B cell (primary cell): ENCODE measurements at regions of chr6 and their contacts with region 1.

Region 1: GRCh38 chr6:111997078-111997852 is 56.6 kb upstream of the CCN6 start:
- DNase-seq: peak; percentile 79
- ATAC-seq: peak; percentile 93
- H3K4me3 ChIP-seq: no peak overlapping the region
- H3K4me3 Mint-ChIP-seq: peak overlapping the region; percentile 30
- H3K27ac ChIP-seq: no peak overlapping the region
- H3K27ac Mint-ChIP-seq: no peak overlapping the region
- H3K4me1 ChIP-seq: peaks cover 4 to 6% of the 10 kb centered on the region in 2 donors
- H3K4me1 Mint-ChIP-seq: peaks cover 9% of the 10 kb centered on the region
- H3K27me3 ChIP-seq: peaks cover 0 to 11% (median 3%) of the 10 kb centered on the region in 4 experiments
- H3K27me3 Mint-ChIP-seq: peaks cover 21% of the 10 kb centered on the region
- CTCF ChIP-seq: peak; percentile 94

Region 2: DNA sequence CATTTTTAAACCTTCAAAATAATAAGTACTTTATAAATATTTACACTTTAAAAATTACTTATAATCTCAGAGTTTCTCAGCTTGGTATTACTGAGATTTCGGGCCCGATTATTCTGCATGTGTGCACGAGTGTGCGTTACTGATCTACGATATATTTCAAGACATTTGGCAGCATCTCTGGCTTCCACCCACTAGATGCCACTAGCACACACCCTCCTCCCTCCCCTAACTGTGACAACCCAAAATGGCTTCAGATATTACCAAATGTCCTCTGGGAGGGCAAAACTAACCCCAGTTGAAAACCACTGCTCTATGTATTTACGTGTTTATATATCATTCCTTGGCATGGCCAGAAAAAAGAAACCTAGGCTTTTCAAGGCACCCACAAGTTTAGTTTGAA is 219.9 kb before region 1 on chr6:
- CTCF ChIA-PET with region 1: no interaction called
- POLR2A ChIA-PET with region 1: no interaction called
- intact Hi-C with region 1: loop called (anchors 1 kb)
- DNase-seq: no peak
- ATAC-seq: peak; percentile 65
- H3K4me3 ChIP-seq: no peak overlapping the region
- H3K4me3 Mint-ChIP-seq: peak overlapping the region; percentile 8
- H3K27ac ChIP-seq: no peak overlapping the region
- H3K27ac Mint-ChIP-seq: no peak overlapping the region
- H3K4me1 ChIP-seq: no peaks in the 10 kb centered on the region
- H3K4me1 Mint-ChIP-seq: peaks cover 19% of the 10 kb centered on the region
- H3K27me3 ChIP-seq: no peaks in the 10 kb centered on the region
- H3K27me3 Mint-ChIP-seq: no peaks in the 10 kb centered on the region
- CTCF ChIP-seq: no peak

Region 3: DNA sequence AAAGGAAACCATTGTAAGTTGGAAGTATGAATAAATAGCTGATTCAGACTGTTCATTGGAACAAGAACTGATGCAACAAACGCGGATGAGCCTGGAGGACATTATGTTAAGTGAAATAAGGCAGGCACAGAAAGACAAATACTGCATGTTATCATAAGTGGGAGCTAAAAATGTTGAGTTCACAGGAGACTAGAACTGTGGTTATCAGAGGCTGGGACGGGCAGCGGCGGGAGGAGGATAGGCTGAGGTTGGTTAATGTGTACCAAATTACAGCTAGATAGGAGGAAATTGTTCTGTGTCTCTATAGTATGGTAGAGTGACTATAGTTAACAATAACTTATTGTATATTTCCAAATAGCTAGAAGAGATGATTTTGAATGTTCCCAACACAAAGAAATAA is 130.9 kb after region 1 on chr6:
- CTCF ChIA-PET with region 1: no interaction called
- POLR2A ChIA-PET with region 1: no interaction called
- intact Hi-C with region 1: no loop called
- DNase-seq: no peak
- ATAC-seq: no peak
- H3K4me3 ChIP-seq: no peak overlapping the region
- H3K4me3 Mint-ChIP-seq: no peak overlapping the region
- H3K27ac ChIP-seq: no peak overlapping the region
- H3K27ac Mint-ChIP-seq: no peak overlapping the region
- H3K4me1 ChIP-seq: no peaks in the 10 kb centered on the region
- H3K4me1 Mint-ChIP-seq: no peaks in the 10 kb centered on the region
- H3K27me3 ChIP-seq: peaks cover 0 to 5% (median 0%) of the 10 kb centered on the region in 4 experiments
- H3K27me3 Mint-ChIP-seq: peaks cover 31% of the 10 kb centered on the region
- CTCF ChIP-seq: no peak

Region 4: DNA sequence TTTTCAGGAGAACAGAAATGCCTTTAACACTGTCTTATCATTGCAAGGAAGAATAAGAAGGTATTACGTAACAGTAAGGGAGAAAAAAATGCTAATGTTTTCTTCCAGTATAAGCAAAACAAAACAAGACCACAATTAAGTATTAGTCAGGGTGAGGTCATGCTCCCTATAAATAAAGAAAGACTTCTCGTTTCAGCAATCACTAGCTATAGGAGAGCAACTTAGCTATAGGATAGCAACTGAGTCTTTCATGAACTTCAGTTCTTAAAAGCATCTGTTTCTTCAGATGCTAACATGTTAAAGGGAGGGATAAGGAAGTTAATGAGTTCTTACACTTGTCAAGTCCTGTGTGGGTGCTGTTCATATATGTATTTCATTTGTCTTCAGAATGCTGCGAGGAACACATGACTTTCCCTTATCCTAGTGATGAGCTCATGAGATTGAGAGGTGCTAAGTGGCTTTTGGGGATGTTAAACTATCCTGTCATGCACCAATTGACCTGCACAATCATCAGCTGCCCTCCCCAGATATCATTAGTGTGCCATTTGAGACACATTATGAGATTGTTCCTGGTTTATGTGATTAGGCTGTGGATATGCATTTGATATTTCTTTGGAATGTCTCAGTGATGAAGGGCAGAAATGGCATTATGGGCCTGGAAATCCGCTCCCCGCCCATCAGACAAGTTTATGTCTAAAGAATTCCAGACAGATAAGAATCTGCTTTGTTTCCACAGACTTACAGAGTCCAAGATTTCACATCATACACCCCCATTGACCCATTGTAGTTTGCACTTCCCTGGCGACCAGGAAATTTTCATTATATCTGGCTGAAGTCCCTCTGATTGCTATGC is 219.7 kb after region 1 on chr6:
- CTCF ChIA-PET with region 1: no interaction called
- POLR2A ChIA-PET with region 1: no interaction called
- intact Hi-C with region 1: no loop called
- DNase-seq: no peak
- ATAC-seq: no peak
- H3K4me3 ChIP-seq: no peak overlapping the region
- H3K4me3 Mint-ChIP-seq: no peak overlapping the region
- H3K27ac ChIP-seq: no peak overlapping the region
- H3K27ac Mint-ChIP-seq: no peak overlapping the region
- H3K4me1 ChIP-seq: no peaks in the 10 kb centered on the region
- H3K4me1 Mint-ChIP-seq: no peaks in the 10 kb centered on the region
- H3K27me3 ChIP-seq: peaks cover 0 to 3% (median 0%) of the 10 kb centered on the region in 4 experiments
- H3K27me3 Mint-ChIP-seq: peaks cover 1% of the 10 kb centered on the region
- CTCF ChIP-seq: no peak